PC-3 (cell line): ENCODE measurements at regions of chr5 and their contacts with region 1.

Region 1: GRCh38 chr5:50962934-50963872 is 296.8 kb downstream of the PARP8 start:
- DNase-seq: peak; percentile 56
- ATAC-seq: peak; percentile 95
- H3K4me3 ChIP-seq: peak overlapping the region; percentile 69
- H3K27ac ChIP-seq: no peak overlapping the region
- H3K4me1 ChIP-seq: no peaks in the 10 kb centered on the region
- H3K27me3 ChIP-seq: peaks cover under 1% of the 10 kb centered on the region; the same call in 1 of the 2 replicates
- CTCF ChIP-seq: peak; percentile 88

Region 2: GRCh38 chr5:50697421-50698138 is 265.6 kb before region 1 on chr5:
- CTCF ChIA-PET with region 1: no interaction called
- POLR2A ChIA-PET with region 1: no interaction called
- intact Hi-C with region 1: no loop called
- DNase-seq: no peak
- ATAC-seq: no peak
- H3K4me3 ChIP-seq: no peak overlapping the region
- H3K27ac ChIP-seq: no peak overlapping the region
- H3K4me1 ChIP-seq: no peaks in the 10 kb centered on the region
- H3K27me3 ChIP-seq: no peaks in the 10 kb centered on the region
- CTCF ChIP-seq: no peak

Region 3: DNA sequence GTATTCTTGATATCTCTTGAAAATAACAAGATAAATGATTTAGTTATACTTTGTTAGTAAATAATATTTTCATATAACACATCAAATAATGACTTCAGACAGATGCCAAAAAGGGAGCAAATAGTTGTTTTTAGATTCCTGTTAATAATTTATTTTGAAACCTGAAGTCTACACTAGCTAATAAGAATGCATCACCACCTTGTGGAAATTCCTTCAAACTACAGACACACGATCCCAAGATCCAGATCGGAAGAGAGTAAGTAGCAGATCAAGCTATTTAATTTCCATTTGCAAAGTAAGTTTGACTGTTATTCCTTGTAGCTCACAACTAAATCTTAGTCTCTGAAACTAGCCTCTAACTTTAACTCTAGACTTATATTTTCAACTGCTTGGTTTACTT is 384.5 kb after region 1 on chr5:
- CTCF ChIA-PET with region 1: interaction called, 5 read pairs
- POLR2A ChIA-PET with region 1: no interaction called
- intact Hi-C with region 1: loop called (anchors 1 kb)
- DNase-seq: peak; percentile 33
- ATAC-seq: peak; percentile 67
- H3K4me3 ChIP-seq: no peak overlapping the region
- H3K27ac ChIP-seq: no peak overlapping the region
- H3K4me1 ChIP-seq: peaks cover 10% of the 10 kb centered on the region
- H3K27me3 ChIP-seq: no peaks in the 10 kb centered on the region
- CTCF ChIP-seq: peak; percentile 52

Region 4: DNA sequence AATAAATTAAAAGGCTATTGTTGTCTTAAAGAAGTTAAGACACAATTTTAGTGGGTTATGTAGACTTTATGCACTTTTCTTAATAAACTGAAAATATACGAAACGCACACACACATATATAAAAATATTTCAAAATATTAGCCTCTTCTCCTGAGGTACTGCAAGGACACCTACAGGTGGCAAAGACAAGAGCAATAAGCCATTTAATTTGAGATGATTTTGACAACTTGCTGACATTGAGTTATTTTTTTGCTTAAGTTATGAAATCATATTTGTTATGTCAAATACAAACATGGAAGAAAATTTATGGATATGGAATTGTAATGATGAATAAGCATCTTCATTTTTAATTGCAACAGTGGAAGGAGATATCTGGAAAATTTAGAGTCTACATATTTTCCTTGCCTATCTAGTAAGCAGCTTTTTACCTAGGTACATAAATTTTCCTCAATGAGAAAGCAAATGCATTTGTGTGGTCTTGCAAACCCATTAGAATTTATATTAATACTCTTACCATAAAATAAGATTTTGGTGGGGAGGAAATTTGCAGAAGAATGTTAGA is 721.7 kb after region 1 on chr5:
- CTCF ChIA-PET with region 1: no interaction called
- POLR2A ChIA-PET with region 1: no interaction called
- intact Hi-C with region 1: loop called (anchors 2 kb)
- DNase-seq: peak; percentile 9
- ATAC-seq: no peak
- H3K4me3 ChIP-seq: no peak overlapping the region
- H3K27ac ChIP-seq: no peak overlapping the region
- H3K4me1 ChIP-seq: no peaks in the 10 kb centered on the region; the same call in 1 of the 2 replicates
- H3K27me3 ChIP-seq: no peaks in the 10 kb centered on the region
- CTCF ChIP-seq: peak; percentile 57

Region 5: DNA sequence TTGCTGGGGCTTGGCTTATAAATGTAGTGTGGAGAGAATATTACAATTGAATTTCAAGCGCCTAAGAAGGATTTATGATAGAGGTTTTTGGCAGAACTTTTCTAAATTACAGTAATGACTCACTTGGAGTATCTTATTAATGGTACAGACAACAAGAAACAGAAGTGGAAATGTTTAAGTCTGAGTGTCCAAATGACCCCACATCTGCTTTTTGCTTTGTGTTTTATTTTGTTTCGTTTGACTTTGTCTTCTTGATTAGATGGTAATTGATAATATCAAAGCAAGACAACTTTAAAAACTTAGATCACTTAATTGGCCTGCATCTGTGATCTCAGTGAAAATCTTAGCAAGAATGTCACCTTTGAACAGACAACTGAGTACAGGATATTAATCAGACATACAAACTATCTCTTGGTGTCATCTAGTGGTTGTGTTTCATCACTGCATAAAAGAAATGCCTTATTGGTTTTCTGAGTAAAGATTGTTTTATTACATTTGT is 997.5 kb after region 1 on chr5:
- CTCF ChIA-PET with region 1: no interaction called
- POLR2A ChIA-PET with region 1: no interaction called
- intact Hi-C with region 1: loop called (anchors 1 kb)
- DNase-seq: peak; percentile 60
- ATAC-seq: peak; percentile 87
- H3K4me3 ChIP-seq: no peak overlapping the region
- H3K27ac ChIP-seq: no peak overlapping the region
- H3K4me1 ChIP-seq: peaks cover 7% of the 10 kb centered on the region
- H3K27me3 ChIP-seq: no peaks in the 10 kb centered on the region
- CTCF ChIP-seq: peak; percentile 78

Region 6: DNA sequence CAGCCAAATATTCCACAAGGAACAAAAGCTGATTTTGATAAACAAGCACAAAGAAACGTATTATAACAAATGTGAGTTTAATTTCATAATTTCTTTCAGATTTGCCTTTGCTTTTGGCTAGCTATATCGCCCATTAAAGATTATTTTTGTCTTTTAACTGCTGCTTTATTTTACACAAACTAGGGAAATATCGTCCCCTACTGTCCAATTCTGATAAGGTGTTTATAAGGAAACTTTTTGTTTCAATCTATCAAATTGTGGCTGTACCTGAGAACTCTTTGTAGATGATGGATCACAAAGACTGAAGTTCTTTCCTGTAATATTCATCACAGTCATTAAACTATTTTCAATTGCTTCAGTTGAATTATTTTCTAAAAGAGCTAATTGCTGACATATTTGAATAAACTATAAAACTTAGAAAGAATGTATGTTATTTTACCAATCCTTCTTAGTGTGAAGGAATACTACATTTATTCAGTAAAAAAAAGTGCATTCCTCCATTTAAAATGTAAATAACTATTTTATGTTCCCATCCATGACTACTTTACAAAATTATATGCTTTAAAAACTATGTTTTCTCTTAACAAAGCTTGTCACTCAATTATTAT is 1393.2 kb after region 1 on chr5:
- CTCF ChIA-PET with region 1: no interaction called
- POLR2A ChIA-PET with region 1: no interaction called
- intact Hi-C with region 1: loop called (anchors 1 kb)
- DNase-seq: peak; percentile 33
- ATAC-seq: no peak
- H3K4me3 ChIP-seq: no peak overlapping the region
- H3K27ac ChIP-seq: no peak overlapping the region
- H3K4me1 ChIP-seq: no peaks in the 10 kb centered on the region
- H3K27me3 ChIP-seq: no peaks in the 10 kb centered on the region
- CTCF ChIP-seq: peak; percentile 66

Region 7: GRCh38 chr5:52657247-52657645 is 1694.0 kb after region 1 on chr5:
- CTCF ChIA-PET with region 1: no interaction called
- POLR2A ChIA-PET with region 1: no interaction called
- intact Hi-C with region 1: loop called (anchors 1 kb)
- DNase-seq: peak; percentile 63
- ATAC-seq: peak; percentile 35
- H3K4me3 ChIP-seq: no peak overlapping the region
- H3K27ac ChIP-seq: no peak overlapping the region
- H3K4me1 ChIP-seq: no peaks in the 10 kb centered on the region
- H3K27me3 ChIP-seq: peaks cover 40% of the 10 kb centered on the region
- CTCF ChIP-seq: peak; percentile 66